Activated CD4-positive, alpha-beta memory T cell treated with anti-CD3 and anti-CD28 coated beads for 36 hours (primary cell): ENCODE measurements at regions of chr2 and their contacts with region 1.

Region 1: DNA sequence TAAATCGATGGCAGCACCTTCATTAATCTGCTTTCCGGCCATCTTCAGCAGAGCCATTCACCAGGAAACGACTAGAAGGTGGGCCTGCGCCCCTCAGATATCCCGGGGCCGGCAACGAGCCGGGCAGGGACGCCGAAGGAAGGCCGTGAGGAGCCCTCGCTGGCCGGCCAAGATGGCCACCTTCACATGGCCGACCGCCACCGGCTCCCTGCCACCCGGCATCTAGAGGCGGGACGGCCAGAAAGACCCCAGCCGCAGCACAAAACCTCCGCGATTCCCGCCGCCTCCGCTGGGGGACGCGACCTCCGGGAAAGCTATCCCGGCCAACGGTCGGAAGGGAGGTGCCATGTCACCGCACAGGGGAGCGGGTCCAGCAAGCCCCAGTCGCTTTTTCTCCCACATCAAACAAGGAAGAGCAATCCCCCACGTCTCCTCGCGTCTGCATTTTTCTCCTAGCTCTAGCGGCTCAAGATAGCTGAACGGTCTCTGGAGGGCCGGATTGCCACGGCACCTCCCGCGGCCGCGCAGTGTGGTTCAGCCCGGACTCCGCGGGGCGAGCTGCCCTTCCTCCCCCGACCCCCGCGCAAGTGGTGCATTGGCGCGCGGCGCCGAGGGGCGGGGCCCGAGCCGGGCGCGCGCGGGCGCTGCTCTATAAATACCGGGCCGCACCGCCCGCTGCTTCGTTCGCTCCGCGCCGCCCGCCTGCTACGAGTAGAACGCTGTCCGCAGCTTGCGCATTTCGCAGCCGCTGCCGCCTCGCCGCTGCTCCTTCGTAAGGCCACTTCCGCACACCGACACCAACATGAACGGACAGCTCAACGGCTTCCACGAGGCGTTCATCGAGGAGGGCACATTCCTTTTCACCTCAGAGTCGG is at the start of gene MAT2A:
- DNase-seq: peak; percentile 93
- H3K4me3 Mint-ChIP-seq: peak within 1 kb of the TSS; percentile 92
- H3K27ac Mint-ChIP-seq: peak within 1 kb of the TSS; percentile 99
- H3K4me1 Mint-ChIP-seq: peaks cover 45% of the 10 kb centered on the region
- H3K27me3 Mint-ChIP-seq: no peaks in the 10 kb centered on the region
- total RNA-seq, gene MAT2A: 196 to 208 TPM

Region 2: GRCh38 chr2:85266146-85267041 is 272.3 kb before region 1 on chr2:
- CTCF ChIA-PET with region 1: no interaction called
- POLR2A ChIA-PET with region 1: no interaction called
- intact Hi-C with region 1: no loop called
- DNase-seq: peak; percentile 80
- H3K4me3 Mint-ChIP-seq: no peak overlapping the region
- H3K27ac Mint-ChIP-seq: no peak overlapping the region
- H3K4me1 Mint-ChIP-seq: no peaks in the 10 kb centered on the region
- H3K27me3 Mint-ChIP-seq: no peaks in the 10 kb centered on the region

Region 3: GRCh38 chr2:85327822-85328617 is 210.7 kb before region 1 on chr2 and contains the start of gene TGOLN2:
- CTCF ChIA-PET with region 1: no interaction called
- POLR2A ChIA-PET with region 1: interaction called, 38 read pairs
- intact Hi-C with region 1: loop called (anchors 2 kb)
- DNase-seq: peak; percentile 95
- H3K4me3 Mint-ChIP-seq: peak within 1 kb of the TSS; percentile 98
- H3K27ac Mint-ChIP-seq: peak within 1 kb of the TSS; percentile 99
- H3K4me1 Mint-ChIP-seq: peaks cover 40% of the 10 kb centered on the region
- H3K27me3 Mint-ChIP-seq: no peaks in the 10 kb centered on the region
- total RNA-seq, gene TGOLN2: 84.8 to 85.9 TPM

Region 4: GRCh38 chr2:85420536-85421259 is 118.0 kb before region 1 on chr2:
- CTCF ChIA-PET with region 1: interaction called, 53 read pairs
- POLR2A ChIA-PET with region 1: interaction called, 58 read pairs
- intact Hi-C with region 1: loop called (anchors 1 kb)
- DNase-seq: peak; percentile 95
- H3K4me3 Mint-ChIP-seq: peak overlapping the region; percentile 53
- H3K27ac Mint-ChIP-seq: peak overlapping the region; percentile 64
- H3K4me1 Mint-ChIP-seq: peaks cover 18% of the 10 kb centered on the region
- H3K27me3 Mint-ChIP-seq: no peaks in the 10 kb centered on the region

Region 5: GRCh38 chr2:85551698-85552678 is 13.3 kb after region 1 on chr2:
- CTCF ChIA-PET with region 1: interaction called, 62 read pairs
- POLR2A ChIA-PET with region 1: interaction called, 52 read pairs
- intact Hi-C with region 1: no loop called
- DNase-seq: peak; percentile 91
- H3K4me3 Mint-ChIP-seq: no peak overlapping the region
- H3K27ac Mint-ChIP-seq: no peak overlapping the region
- H3K4me1 Mint-ChIP-seq: peaks cover 3% of the 10 kb centered on the region
- H3K27me3 Mint-ChIP-seq: no peaks in the 10 kb centered on the region

Region 6: DNA sequence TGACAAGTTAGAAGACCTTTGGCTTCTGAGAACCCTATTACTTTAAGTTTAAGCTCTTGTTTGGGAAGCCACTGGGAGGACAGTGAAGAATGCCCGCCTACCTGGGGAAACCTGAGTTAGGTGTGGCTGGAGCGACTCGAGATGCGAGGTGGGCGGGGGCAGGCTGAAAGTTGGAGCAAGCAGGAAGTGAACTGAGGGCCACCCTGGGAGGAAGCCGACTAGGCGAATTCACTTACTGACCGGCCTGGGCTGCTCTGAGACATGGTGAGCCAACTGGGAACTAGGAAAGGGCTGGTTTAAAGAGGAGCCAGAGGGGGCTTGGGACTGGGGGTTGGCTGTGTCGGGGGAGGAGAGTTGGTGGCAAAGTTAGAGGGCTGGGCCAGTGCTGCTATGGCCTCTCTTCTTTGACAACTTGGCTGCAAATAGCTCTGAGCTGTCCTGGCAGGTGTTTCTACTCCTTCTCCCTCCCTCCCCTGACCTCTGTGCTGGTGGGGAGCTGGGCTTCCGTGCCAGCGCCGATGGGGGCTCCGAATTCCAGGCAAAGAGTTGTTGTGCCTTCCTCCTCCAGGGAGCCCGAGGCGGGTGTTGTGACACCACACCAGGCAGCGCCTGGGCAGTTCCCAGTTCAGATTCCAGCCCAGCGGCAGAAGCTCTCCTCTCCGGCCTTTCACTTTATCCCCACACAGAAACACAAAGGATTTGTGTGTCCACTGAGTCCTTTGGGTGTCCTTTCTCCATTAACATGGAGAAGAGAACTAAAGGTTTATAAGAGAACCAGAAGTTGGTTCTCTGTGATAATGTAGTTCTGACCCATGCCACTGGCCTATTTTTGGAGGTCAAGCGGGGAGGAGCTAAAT is 38.9 kb after region 1 on chr2 and contains the start of gene VAMP8:
- CTCF ChIA-PET with region 1: no interaction called
- POLR2A ChIA-PET with region 1: interaction called, 12 read pairs
- intact Hi-C with region 1: no loop called
- DNase-seq: peak; percentile 83
- H3K4me3 Mint-ChIP-seq: peak within 1 kb of the TSS; percentile 95
- H3K27ac Mint-ChIP-seq: peak within 1 kb of the TSS; percentile 87
- H3K4me1 Mint-ChIP-seq: peaks cover 28% of the 10 kb centered on the region
- H3K27me3 Mint-ChIP-seq: no peaks in the 10 kb centered on the region
- total RNA-seq, gene VAMP8: 112 to 114 TPM